GM13977 (cell line): ENCODE measurements at regions of chr17 and their contacts with region 1.

Region 1: DNA sequence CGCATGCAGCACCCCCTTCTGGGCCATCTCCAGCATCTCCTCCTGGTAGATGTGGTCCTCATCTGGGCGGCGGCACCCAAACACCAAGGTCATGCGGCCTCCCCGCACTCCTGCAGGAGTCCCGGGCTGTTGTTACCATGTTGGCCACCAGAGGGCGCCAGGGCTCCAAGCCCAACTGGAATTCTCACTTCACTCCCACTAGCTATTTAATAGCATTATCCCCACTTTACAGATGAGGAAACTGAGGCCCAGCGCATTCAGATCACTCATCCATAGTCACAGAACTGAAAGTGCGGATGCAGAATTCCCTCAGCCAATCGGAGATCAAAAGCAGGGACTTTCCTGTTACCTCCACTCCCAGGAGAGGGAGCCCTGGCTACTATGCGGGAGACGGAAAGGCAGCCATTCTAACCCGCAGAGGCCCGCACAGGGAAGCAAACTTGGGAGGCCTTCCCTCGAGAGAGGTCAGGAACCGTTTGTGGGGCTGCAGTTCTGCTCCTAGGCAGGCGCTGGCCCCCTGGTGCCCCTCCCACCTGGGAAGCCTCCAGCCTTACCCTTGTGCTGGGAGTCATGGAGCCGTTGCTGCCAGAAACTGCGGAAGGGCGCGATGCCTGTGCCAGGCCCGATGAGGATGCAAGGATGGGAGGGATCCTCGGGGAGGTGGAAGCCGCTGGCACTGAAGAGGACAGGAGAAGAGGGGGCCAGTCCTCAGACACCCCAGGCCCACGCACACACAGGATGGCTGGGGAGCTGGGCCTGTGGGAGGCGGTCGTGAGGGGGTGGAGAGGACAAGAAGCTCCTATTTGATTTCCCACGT is 40.1 kb downstream of the NOS2 start:
- DNase-seq: peak; percentile 69
- CTCF ChIP-seq: peak; percentile 86

Region 2: DNA sequence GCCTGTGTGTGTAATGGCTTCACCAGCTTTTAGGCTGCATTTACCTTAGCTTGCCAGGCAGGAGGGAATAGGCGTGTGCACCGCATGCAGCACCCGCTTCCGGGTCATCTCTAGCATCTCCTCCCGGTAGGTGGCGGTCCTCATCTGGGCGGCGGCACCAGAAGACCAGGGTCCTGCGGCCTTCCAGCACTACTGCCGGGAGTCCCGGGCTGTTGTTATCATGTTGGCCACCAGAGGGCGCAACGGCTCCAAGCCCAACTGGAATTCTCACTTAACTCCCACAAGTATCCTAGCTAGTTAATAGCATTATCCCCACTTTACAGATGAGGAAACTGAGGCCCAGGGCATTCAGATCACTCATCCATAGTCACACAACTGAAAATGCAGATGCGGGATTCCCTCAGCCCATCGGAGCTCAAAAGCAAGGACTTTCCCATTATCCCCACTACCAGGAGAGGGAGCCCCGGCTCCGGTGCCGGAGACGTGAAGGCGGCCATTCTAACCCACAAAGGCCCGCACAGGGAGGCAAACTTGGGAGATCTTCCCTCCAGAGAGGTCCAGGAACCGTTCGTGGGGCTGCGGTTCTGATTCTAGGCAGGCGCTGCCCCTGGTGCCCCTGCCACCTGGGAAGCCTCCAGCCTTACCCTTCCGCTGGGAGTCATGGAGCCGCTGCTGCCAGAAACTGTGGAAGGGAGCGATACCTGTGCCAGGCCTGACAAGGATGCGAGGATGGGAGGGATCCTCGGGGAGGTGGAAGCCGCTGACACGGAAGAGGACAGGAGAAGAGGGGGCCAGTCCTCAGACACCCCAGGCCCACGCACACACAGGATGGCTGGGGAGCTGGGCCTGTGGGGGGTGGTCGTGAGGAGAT is 105.4 kb before region 1 on chr17:
- in situ Hi-C with region 1: loop called (anchors 10 kb)
- DNase-seq: peak; percentile 85
- CTCF ChIP-seq: peak; percentile 82